Posterior cingulate gyrus (tissue), 11 donors: ENCODE measurements at regions of chr3 and their contacts with region 1.

Region 1: GRCh38 chr3:46998121-46998851 is 18.8 kb downstream of the NBEAL2 start:
- DNase-seq: peak in 7 of 10 donors; percentile 37 to 89 (median 60)

Region 2: GRCh38 chr3:46593274-46593862 is 404.9 kb before region 1 on chr3:
- intact Hi-C with region 1: no loop called
- DNase-seq: no peak

Region 3: GRCh38 chr3:46923559-46924350 is 74.5 kb before region 1 on chr3:
- intact Hi-C with region 1: loop called (anchors 2 kb)
- DNase-seq: peak in 5 of 10 donors; percentile 41 to 87 (median 48)